IMR-90 (cell line): ENCODE measurements at regions of chr3 and their contacts with region 1.

Region 1: GRCh38 chr3:147616998-147617619 is 207.9 kb downstream of the ZIC1 start:
- DNase-seq: peak; percentile 12
- ATAC-seq: no peak
- H3K4me3 ChIP-seq: no peak overlapping the region
- H3K27ac ChIP-seq: no peak overlapping the region
- H3K4me1 ChIP-seq: no peaks in the 10 kb centered on the region
- H3K27me3 ChIP-seq: no peaks in the 10 kb centered on the region
- CTCF ChIP-seq: peak; percentile 52
- POLR2A ChIP-seq: no peak
- RAD21 ChIP-seq: peak; percentile 37

Region 2: DNA sequence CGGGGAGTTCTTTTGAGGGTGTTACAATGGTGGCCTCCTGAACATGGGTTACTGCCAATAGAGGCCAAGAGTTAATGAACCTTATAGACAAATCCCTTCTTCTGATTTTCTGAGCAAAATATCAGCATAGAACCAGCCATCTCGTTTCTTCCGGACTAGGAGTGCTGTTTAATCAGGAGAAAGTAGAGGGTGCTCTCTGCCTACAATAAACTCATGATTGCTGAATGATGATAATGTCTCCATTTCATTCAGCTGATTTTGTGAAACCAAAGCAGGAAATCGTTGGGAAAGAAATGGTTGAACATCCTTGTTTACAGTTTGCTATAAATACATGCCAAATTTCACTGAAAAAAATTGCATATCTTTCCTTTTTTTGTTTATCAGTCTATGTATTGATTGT is 869.2 kb before region 1 on chr3:
- CTCF ChIA-PET with region 1: no interaction called
- POLR2A ChIA-PET with region 1: no interaction called
- dilution Hi-C with region 1: no loop called
- in situ Hi-C with region 1: no loop called
- intact Hi-C with region 1: loop called (anchors 10 kb)
- DNase-seq: peak; percentile 33
- ATAC-seq: no peak
- H3K4me3 ChIP-seq: no peak overlapping the region
- H3K27ac ChIP-seq: no peak overlapping the region
- H3K4me1 ChIP-seq: no peaks in the 10 kb centered on the region
- H3K27me3 ChIP-seq: no peaks in the 10 kb centered on the region
- CTCF ChIP-seq: peak; percentile 39
- POLR2A ChIP-seq: no peak
- RAD21 ChIP-seq: peak; percentile 48

Region 3: DNA sequence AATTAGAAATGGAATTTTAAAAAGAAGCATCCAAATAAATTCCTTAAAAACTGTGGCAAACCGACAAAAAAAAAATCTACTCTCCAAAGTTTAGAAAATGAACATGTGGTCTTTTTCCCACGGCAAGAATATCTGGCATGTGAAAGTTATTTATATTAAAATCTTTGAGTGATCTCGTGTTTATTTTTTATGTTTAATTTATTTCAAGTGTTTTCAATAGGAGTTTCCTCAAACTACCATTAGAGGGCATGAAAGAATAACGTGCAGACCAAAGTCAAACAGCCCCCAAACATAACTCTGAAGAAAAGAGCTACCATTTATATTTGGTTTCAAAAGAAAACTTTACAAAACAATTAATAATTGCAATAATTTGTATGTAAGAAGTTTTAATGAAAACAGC is 497.1 kb before region 1 on chr3:
- CTCF ChIA-PET with region 1: no interaction called
- POLR2A ChIA-PET with region 1: no interaction called
- dilution Hi-C with region 1: no loop called
- in situ Hi-C with region 1: no loop called
- intact Hi-C with region 1: loop called (anchors 5 kb)
- DNase-seq: peak; percentile 45
- ATAC-seq: peak; percentile 66
- H3K4me3 ChIP-seq: no peak overlapping the region
- H3K27ac ChIP-seq: no peak overlapping the region
- H3K4me1 ChIP-seq: no peaks in the 10 kb centered on the region
- H3K27me3 ChIP-seq: no peaks in the 10 kb centered on the region
- CTCF ChIP-seq: peak; percentile 61
- POLR2A ChIP-seq: no peak
- RAD21 ChIP-seq: peak; percentile 61

Region 4: GRCh38 chr3:147582642-147583041 is 34.5 kb before region 1 on chr3:
- CTCF ChIA-PET with region 1: no interaction called
- POLR2A ChIA-PET with region 1: no interaction called
- dilution Hi-C with region 1: no loop called
- in situ Hi-C with region 1: no loop called
- intact Hi-C with region 1: no loop called
- DNase-seq: no peak
- ATAC-seq: no peak
- H3K4me3 ChIP-seq: no peak overlapping the region
- H3K27ac ChIP-seq: no peak overlapping the region
- H3K4me1 ChIP-seq: no peaks in the 10 kb centered on the region
- H3K27me3 ChIP-seq: no peaks in the 10 kb centered on the region
- CTCF ChIP-seq: no peak
- POLR2A ChIP-seq: no peak
- RAD21 ChIP-seq: no peak